ENCODE measurements at regions of chr1 and their contacts with region 1.

Region 1: GRCh38 chr1:52033190-52034049 is at the start of gene KTI12:
- DNase-seq: peak; percentile 93
- ATAC-seq: peak; percentile 94
- H3K4me3 Mint-ChIP-seq: peak within 1 kb of the TSS; percentile 91
- H3K27ac Mint-ChIP-seq: peak within 1 kb of the TSS; percentile 93
- H3K4me1 Mint-ChIP-seq: peaks cover 32% of the 10 kb centered on the region
- H3K27me3 Mint-ChIP-seq: no peaks in the 10 kb centered on the region
- total RNA-seq, gene KTI12: 7.6 to 12.3 TPM

Region 2: DNA sequence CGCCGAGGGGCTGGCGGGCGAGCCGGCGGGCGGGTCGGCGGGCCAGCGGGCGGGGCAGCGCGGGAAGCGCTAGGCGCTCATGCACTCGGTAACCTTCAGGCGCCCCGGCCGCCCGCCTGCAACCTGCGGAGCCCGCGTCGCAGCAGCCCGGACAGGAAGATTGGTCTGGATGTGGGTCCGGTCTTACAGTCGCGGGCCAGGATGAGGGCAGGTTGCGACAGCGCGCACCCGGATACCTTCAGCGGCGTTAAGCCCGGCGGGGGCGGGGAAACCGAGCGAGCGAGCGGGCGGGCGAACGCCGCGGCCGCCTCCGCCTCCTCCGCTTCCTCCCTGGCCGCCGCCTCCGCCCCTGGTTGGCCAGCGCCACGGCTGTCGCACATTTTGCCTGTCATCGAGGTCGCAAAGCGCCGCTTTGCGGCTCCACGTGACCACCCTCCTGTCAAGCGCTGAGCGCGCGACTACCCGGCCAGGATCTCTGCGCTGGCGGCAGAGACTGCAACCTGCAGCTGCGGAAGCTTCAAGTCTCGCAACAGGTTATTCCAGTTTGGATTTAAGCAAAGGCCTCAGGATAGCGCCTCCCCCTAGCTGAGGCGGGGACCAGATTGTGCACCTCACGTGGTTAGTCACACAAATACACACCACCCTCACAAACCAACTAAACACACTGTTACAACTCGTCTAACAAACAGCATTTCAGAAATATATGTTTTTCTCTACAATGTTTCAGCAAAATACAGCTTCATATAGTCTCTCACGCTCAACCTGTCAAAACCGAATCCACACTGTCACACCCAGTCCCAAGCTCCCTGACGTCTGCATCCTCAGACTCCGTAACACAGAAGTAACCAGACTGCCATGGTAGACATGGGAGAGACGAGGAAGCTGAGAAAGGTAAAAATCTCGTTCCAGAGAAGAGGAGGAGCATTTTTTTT is 1073.2 kb before region 1 on chr1 and contains the start of gene FAF1:
- CTCF ChIA-PET with region 1: no interaction called
- POLR2A ChIA-PET with region 1: no interaction called
- intact Hi-C with region 1: loop called in 1 of 2 experiments (anchors 2 kb)
- DNase-seq: peak; percentile 98
- ATAC-seq: peak; percentile 91
- H3K4me3 Mint-ChIP-seq: peak within 1 kb of the TSS; percentile 80
- H3K27ac Mint-ChIP-seq: peak within 1 kb of the TSS; percentile 96
- H3K4me1 Mint-ChIP-seq: peaks cover 24% of the 10 kb centered on the region
- H3K27me3 Mint-ChIP-seq: no peaks in the 10 kb centered on the region
- total RNA-seq, gene FAF1: 64.5 to 73.1 TPM

Region 3: DNA sequence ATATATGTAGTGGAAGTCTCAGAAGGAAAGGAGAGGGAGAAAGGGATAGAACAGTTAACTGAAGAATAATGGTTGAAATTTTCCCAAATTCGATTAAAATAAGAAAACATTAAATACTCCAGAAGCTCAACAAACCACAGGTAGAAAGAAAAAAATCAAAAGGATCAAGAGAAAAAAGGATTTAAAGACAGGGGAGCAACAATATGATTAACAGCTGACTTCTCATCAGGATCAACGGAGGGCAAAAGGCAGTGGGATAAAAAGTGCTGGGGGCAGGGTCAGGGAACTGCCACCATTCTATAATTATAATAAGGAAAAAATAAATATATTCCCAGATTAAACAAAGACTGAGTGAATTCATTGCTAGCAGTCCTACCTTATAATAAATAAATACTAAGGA is 1008.0 kb before region 1 on chr1:
- CTCF ChIA-PET with region 1: no interaction called
- POLR2A ChIA-PET with region 1: no interaction called
- intact Hi-C with region 1: no loop called
- DNase-seq: no peak
- ATAC-seq: no peak
- H3K4me3 Mint-ChIP-seq: no peak overlapping the region
- H3K27ac Mint-ChIP-seq: no peak overlapping the region
- H3K4me1 Mint-ChIP-seq: no peaks in the 10 kb centered on the region
- H3K27me3 Mint-ChIP-seq: peaks cover 4% of the 10 kb centered on the region

Region 4: GRCh38 chr1:51969038-51969705 is 64.2 kb before region 1 on chr1:
- CTCF ChIA-PET with region 1: no interaction called
- POLR2A ChIA-PET with region 1: no interaction called
- intact Hi-C with region 1: no loop called
- DNase-seq: no peak
- ATAC-seq: no peak
- H3K4me3 Mint-ChIP-seq: no peak overlapping the region
- H3K27ac Mint-ChIP-seq: no peak overlapping the region
- H3K4me1 Mint-ChIP-seq: peaks cover 7% of the 10 kb centered on the region
- H3K27me3 Mint-ChIP-seq: peaks cover 4% of the 10 kb centered on the region

Region 5: GRCh38 chr1:52080014-52080415 is 46.6 kb after region 1 on chr1:
- CTCF ChIA-PET with region 1: no interaction called
- POLR2A ChIA-PET with region 1: no interaction called
- intact Hi-C with region 1: loop called in 1 of 2 experiments (anchors 5 kb)
- DNase-seq: no peak
- ATAC-seq: no peak
- H3K4me3 Mint-ChIP-seq: no peak overlapping the region
- H3K27ac Mint-ChIP-seq: no peak overlapping the region
- H3K4me1 Mint-ChIP-seq: peaks cover 3% of the 10 kb centered on the region
- H3K27me3 Mint-ChIP-seq: no peaks in the 10 kb centered on the region

Region 6: DNA sequence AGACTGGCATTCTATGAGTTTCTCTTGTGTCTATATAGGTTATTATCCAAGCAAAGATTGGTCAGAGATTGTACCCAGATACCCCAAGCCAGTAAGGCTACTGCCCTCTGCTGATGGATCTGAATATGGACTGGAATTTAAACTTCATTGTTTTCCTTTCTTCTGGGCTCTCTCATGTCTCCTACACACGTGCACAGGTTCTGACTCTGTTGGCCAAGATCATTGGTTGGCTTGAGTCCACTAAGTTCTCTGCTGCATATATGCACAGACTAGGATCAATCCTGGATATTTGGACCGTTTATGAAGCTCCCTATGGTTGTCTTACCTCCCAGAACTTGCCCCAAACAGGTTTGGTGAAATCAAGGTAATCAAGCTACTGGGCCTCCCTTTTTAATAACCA is 262.9 kb after region 1 on chr1:
- CTCF ChIA-PET with region 1: no interaction called
- POLR2A ChIA-PET with region 1: no interaction called
- intact Hi-C with region 1: loop called in 1 of 2 experiments (anchors 2 kb)
- DNase-seq: no peak
- ATAC-seq: peak; percentile 63
- H3K4me3 Mint-ChIP-seq: no peak overlapping the region
- H3K27ac Mint-ChIP-seq: no peak overlapping the region
- H3K4me1 Mint-ChIP-seq: no peaks in the 10 kb centered on the region
- H3K27me3 Mint-ChIP-seq: no peaks in the 10 kb centered on the region

Region 7: GRCh38 chr1:53220171-53220961 is 1186.9 kb after region 1 on chr1 and contains the start of gene CZIB:
- CTCF ChIA-PET with region 1: no interaction called
- POLR2A ChIA-PET with region 1: no interaction called
- intact Hi-C with region 1: loop called in 1 of 2 experiments (anchors 1 kb)
- DNase-seq: peak; percentile 98
- ATAC-seq: peak; percentile 95
- H3K4me3 Mint-ChIP-seq: peak within 1 kb of the TSS; percentile 87
- H3K27ac Mint-ChIP-seq: peak within 1 kb of the TSS; percentile 94
- H3K4me1 Mint-ChIP-seq: peaks cover 24% of the 10 kb centered on the region
- H3K27me3 Mint-ChIP-seq: no peaks in the 10 kb centered on the region
- total RNA-seq, gene CZIB: 45.4 to 48.7 TPM